Right cardiac atrium (tissue), 5 donors: ENCODE measurements at regions of chr3 and their contacts with region 1.

Region 1: DNA sequence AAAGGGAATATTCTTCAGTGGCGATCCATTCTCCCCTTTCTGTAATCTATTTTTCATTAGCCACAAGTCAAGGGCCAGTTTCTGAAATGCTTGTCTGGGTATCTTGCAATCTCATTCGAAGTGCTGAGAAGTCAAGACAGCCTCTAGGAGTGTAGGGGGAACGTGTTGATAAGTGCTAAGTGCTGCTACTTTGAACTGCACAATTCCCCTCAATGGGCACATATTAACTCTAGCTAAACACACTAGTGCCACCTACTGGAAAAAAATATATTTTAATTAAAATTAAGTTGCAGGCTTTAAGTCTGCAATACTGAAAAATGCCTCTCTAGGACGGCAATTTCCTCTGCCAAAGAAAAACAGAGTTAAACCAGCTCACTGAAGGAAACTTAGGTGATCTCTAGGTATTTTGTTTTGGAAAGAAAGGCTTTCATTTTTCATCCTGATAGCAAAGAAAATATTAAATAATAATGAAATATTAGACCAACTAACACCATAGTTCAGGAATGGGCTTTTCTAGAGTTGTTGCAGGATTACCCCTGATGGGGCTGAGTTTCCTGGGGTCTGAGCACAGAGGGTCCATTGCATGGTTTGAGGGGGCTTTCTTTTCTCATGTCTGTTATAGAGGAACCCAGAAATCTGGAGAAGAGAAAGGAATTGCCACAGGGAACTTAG is 181.9 kb upstream of the KBTBD8 start:
- DNase-seq: no peak
- ATAC-seq: peak; percentile 84 to 89
- H3K4me3 ChIP-seq: no peak overlapping the region
- H3K27ac ChIP-seq: no peak overlapping the region
- H3K4me1 ChIP-seq: no peaks in the 10 kb centered on the region
- H3K27me3 ChIP-seq: no peaks in the 10 kb centered on the region

Region 2: DNA sequence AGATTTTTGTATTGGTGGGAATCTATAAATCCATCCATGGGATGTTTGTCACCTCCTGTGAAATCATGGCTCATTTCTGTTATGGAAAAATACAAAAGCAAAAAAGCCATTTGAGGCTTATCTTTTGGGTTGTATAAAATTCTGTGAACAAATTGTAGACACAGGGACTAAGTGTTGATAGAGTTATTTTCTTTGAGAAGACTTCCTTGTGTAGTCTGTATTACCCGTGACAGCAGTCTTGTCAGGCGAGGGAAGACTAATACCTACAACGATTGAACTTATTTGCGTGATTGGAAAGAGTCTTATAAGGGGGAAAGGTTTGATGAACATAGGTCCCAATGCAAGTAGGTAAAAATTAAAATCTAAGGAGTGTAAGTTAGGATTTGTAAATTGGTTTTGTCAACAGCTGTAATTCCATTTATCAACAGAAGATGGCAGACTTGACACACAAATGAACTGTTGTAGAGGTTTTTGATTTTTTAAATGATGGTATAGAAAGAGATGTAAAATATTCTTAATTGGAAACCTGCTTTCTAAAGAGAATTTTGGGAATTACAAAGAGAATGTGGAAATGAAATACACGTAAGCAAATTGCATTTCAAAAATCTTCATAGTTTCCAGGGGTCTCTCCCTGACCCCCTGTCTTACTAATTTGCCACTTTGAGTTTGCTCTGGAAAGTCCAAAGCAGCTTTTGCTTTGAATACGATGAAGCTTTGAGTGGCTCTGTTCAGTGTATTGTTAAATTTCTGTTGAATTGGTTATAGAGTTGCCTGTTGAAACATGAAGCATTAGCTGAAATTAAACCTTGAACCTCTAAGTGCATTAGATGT is 562.2 kb before region 1 on chr3:
- intact Hi-C with region 1: loop called (anchors 5 to 10 kb)
- DNase-seq: no peak
- ATAC-seq: no peak
- H3K4me3 ChIP-seq: no peak overlapping the region
- H3K27ac ChIP-seq: no peak overlapping the region
- H3K4me1 ChIP-seq: no peaks in the 10 kb centered on the region
- H3K27me3 ChIP-seq: no peaks in the 10 kb centered on the region

Region 3: DNA sequence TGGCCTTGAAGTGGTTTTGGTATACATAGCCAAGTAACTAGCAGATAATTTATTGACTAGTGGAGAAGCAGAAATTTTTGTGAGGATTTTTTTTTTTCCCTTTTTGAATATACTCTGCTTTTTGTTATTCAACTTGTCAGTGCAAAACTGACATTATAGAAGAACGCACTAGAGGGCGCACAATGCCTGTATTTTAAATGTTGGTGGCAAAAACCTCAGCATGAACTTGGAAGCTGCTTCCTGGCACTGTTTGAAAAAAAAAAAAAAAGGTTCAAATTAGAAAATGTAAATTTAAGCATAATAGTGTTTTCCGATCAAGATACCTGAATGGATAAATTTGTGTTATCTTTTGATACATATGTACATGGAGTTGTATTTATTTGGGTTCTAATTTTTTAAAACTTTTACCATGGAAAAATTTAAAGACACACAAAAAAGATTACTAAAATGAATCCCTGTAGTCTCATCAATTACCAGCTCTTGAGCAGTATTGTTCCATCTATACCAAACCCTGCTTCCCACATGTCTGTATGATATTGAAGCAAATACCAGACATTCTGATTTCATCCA is 539.4 kb before region 1 on chr3:
- intact Hi-C with region 1: loop called (anchors 2 to 5 kb)
- DNase-seq: peak in 1 of 3 donors; percentile 23
- ATAC-seq: peak in 1 of 2 donors; percentile 39
- H3K4me3 ChIP-seq: no peak overlapping the region
- H3K27ac ChIP-seq: no peak overlapping the region
- H3K4me1 ChIP-seq: no peaks in the 10 kb centered on the region
- H3K27me3 ChIP-seq: no peaks in the 10 kb centered on the region

Region 4: DNA sequence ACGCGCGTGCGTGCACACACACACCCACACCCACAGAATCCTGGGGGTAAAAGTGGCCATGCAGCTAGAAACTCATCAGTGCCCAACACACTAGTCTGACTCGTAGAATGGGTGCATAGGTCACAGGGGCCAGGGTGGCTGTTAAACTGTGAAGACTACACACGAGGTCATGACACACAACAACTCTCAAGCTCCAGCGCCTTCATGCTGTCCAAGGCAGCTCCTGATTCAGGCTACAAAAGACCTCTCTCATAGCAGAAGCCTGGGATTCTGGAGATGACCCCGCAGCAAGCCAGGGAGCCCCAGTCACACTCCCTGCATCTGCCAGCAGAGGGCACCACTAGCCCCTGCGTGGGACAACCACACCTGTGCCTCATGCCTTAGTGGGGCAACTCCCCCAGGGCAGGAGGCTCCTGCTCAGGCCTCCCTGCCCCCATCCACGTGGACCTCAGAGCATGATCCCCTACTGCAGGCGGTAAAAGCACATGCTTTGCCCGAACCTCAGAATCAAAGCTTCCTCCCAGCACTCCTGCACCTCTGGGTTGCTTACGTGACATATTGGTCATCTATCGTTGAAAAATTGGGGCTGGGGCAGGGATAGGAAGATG is 408.5 kb before region 1 on chr3:
- intact Hi-C with region 1: loop called in 3 of 4 experiments (anchors 5 to 10 kb)
- DNase-seq: peak; percentile 67 to 91 (median 89)
- ATAC-seq: peak; percentile 64 to 65
- H3K4me3 ChIP-seq: no peak overlapping the region
- H3K27ac ChIP-seq: no peak overlapping the region
- H3K4me1 ChIP-seq: peaks cover 2% of the 10 kb centered on the region
- H3K27me3 ChIP-seq: no peaks in the 10 kb centered on the region

Region 5: GRCh38 chr3:66856533-66856932 is 40.3 kb after region 1 on chr3:
- intact Hi-C with region 1: no loop called
- DNase-seq: no peak
- ATAC-seq: no peak
- H3K4me3 ChIP-seq: no peak overlapping the region
- H3K27ac ChIP-seq: no peak overlapping the region
- H3K4me1 ChIP-seq: no peaks in the 10 kb centered on the region
- H3K27me3 ChIP-seq: no peaks in the 10 kb centered on the region